Heart left ventricle (tissue), 16 donors: ENCODE measurements at regions of chr4 and their contacts with region 1.

Region 1: GRCh38 chr4:169010125-169011023 is at the start of gene CBR4:
- DNase-seq: peak; percentile 97 to 99 (median 99)
- ATAC-seq: peak; percentile 99
- H3K4me3 ChIP-seq: peak within 1 kb of the TSS; percentile 49 to 89 (median 74)
- H3K27ac ChIP-seq: peak within 1 kb of the TSS; percentile 76 to 98 (median 94)
- H3K4me1 ChIP-seq: peaks cover 0 to 45% (median 27%) of the 10 kb centered on the region in 12 donors
- H3K27me3 ChIP-seq: no peaks in the 10 kb centered on the region
- CTCF ChIP-seq: peak in 9 of 12 donors; percentile 24 to 49 (median 39)
- POLR2A ChIP-seq: peak in 1 of 2 donors; percentile 95
- total RNA-seq, gene CBR4: 17.2 to 26.5 (median 24.2) TPM

Region 2: DNA sequence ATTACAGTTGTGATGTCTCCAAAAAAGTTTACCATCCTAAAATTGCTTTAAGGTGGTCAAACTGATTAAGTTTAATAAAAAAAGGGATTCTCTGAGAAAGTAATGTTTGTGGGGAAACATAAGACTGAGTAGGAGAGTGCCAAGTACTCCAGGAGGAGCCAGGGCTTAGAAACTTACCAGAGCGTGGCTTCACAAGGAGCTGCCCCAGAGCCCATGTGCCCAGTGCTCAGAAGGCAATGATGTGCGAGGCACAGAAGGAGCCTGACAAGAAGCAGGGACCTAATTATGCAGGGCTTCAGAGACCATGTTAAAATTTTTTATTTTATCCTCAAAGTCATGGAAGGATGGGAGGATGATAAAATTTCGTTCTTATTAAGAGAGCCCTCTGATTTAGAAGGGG is 309.3 kb before region 1 on chr4:
- intact Hi-C with region 1: loop called in 1 of 10 experiments (anchors 5 kb)
- DNase-seq: no peak
- ATAC-seq: peak in 1 of 4 donors; percentile 39
- H3K4me3 ChIP-seq: no peak overlapping the region
- H3K27ac ChIP-seq: no peak overlapping the region
- H3K4me1 ChIP-seq: no peaks in the 10 kb centered on the region
- H3K27me3 ChIP-seq: no peaks in the 10 kb centered on the region
- CTCF ChIP-seq: no peak
- POLR2A ChIP-seq: no peak

Region 3: DNA sequence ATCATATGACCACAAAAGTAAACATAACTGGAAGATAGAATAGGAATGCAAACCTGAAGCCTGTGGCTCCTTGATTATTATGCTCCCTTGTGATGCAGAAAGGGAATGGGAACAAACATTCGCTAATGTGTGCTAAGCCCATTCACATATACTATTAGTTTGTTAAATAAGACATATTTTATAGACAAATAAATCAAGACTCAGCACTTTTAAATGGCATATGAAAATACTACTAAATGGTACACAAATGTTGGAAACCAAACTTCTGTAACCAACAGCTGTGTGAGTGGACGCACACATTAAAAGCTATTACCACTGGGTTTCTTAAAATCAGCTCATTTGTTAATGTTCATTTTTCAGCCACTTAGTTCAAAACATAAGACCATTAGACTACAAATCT is 96.3 kb before region 1 on chr4:
- intact Hi-C with region 1: no loop called
- DNase-seq: no peak
- ATAC-seq: no peak
- H3K4me3 ChIP-seq: no peak overlapping the region
- H3K27ac ChIP-seq: peak overlapping the region in 6 of 12 donors; percentile 27 to 51 (median 41)
- H3K4me1 ChIP-seq: peaks cover 0 to 31% (median 7%) of the 10 kb centered on the region in 12 donors
- H3K27me3 ChIP-seq: no peaks in the 10 kb centered on the region
- CTCF ChIP-seq: no peak
- POLR2A ChIP-seq: no peak

Region 4: DNA sequence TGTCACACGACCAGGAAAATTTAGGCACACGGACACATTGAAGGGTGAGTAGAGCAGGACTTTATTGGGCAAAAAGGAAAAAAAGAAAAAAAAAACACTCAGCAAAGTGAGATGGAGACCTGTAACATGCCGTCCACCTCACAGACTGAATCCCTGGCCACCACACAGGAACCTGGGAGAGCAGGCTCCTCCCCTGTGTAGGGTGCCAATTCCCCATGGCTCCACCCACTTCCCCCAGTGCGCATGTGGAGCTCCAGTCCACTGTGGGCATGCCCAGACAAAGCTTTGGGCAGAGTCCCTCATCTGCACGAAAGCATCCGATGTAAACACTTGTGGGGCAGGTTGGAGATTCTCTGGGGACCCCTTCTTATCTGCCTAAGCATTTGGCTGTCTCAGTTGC is 23.3 kb after region 1 on chr4:
- intact Hi-C with region 1: no loop called
- DNase-seq: peak in 1 of 5 donors; percentile 62
- ATAC-seq: peak in 3 of 4 donors; percentile 45 to 62 (median 51)
- H3K4me3 ChIP-seq: no peak overlapping the region
- H3K27ac ChIP-seq: no peak overlapping the region
- H3K4me1 ChIP-seq: no peaks in the 10 kb centered on the region
- H3K27me3 ChIP-seq: no peaks in the 10 kb centered on the region
- CTCF ChIP-seq: no peak
- POLR2A ChIP-seq: no peak

Region 5: DNA sequence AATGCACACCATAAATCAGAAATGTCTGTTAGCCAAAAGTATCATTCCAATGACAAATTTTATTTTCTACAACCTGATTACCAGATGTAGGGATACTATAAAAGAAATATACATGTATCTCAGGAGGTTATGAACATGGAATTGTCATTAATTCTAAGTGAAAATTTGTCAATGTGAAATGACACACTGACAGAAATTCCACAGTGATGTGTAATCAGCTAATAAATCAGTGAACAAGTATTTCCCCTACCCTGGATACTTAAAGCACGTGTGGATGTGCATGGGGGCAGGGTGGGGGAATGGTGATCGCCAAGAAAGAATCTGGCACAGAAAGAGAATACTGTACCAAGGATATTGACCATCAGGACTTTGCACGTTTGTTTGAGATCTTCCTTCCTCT is 136.8 kb after region 1 on chr4:
- intact Hi-C with region 1: loop called in 1 of 10 experiments (anchors 10 kb)
- DNase-seq: no peak
- ATAC-seq: no peak
- H3K4me3 ChIP-seq: no peak overlapping the region
- H3K27ac ChIP-seq: no peak overlapping the region
- H3K4me1 ChIP-seq: peaks cover 0 to 12% (median 0%) of the 10 kb centered on the region in 12 donors
- H3K27me3 ChIP-seq: no peaks in the 10 kb centered on the region
- CTCF ChIP-seq: no peak
- POLR2A ChIP-seq: no peak

Region 6: DNA sequence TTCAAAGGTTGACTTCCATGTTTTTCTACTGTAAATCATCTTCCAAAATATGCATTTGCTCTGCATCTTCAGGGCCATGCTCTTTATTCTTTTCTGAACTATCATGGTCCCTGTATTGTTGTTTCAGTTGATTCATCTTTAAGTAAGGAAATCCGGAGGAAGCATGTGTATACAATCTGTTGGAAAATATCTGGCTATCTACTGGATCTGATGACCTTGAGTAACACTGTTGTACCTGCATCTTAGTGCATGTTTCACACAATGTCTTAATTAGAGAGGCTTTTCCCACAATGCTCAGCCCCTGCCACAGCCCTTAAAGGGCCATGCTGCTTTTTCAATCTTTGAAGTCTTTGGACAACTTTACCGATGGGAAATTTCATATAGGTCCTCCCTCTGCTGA is 322.2 kb after region 1 on chr4:
- intact Hi-C with region 1: no loop called
- DNase-seq: no peak
- ATAC-seq: no peak
- H3K4me3 ChIP-seq: no peak overlapping the region
- H3K27ac ChIP-seq: no peak overlapping the region
- H3K4me1 ChIP-seq: peaks cover 0 to 4% (median 0%) of the 10 kb centered on the region in 12 donors
- H3K27me3 ChIP-seq: no peaks in the 10 kb centered on the region
- CTCF ChIP-seq: no peak
- POLR2A ChIP-seq: no peak

Region 7: GRCh38 chr4:169485791-169486742 is 475.7 kb after region 1 on chr4:
- intact Hi-C with region 1: loop called in 3 of 10 experiments (anchors 5 kb)
- DNase-seq: no peak
- ATAC-seq: peak in 2 of 4 donors; percentile 53 to 63
- H3K4me3 ChIP-seq: peak overlapping the region in 1 of 12 donors; percentile 8
- H3K27ac ChIP-seq: no peak overlapping the region
- H3K4me1 ChIP-seq: peaks cover 0 to 5% (median 0%) of the 10 kb centered on the region in 12 donors
- H3K27me3 ChIP-seq: no peaks in the 10 kb centered on the region
- CTCF ChIP-seq: peak; percentile 18 to 72 (median 58)
- POLR2A ChIP-seq: no peak

Region 8: GRCh38 chr4:169566021-169566818 is 555.8 kb after region 1 on chr4:
- intact Hi-C with region 1: loop called in 1 of 10 experiments (anchors 10 kb)
- DNase-seq: peak in 2 of 5 donors; percentile 17 to 32
- ATAC-seq: peak; percentile 61 to 78 (median 75)
- H3K4me3 ChIP-seq: peak overlapping the region in 4 of 12 donors; percentile 8 to 26 (median 13)
- H3K27ac ChIP-seq: peak overlapping the region in 2 of 12 donors; percentile 0 to 17
- H3K4me1 ChIP-seq: peaks cover 0 to 17% (median 6%) of the 10 kb centered on the region in 12 donors
- H3K27me3 ChIP-seq: no peaks in the 10 kb centered on the region
- CTCF ChIP-seq: peak; percentile 56 to 86 (median 72)
- POLR2A ChIP-seq: no peak